ENCODE measurements at regions of chr3 and their contacts with region 1.

Region 1: DNA sequence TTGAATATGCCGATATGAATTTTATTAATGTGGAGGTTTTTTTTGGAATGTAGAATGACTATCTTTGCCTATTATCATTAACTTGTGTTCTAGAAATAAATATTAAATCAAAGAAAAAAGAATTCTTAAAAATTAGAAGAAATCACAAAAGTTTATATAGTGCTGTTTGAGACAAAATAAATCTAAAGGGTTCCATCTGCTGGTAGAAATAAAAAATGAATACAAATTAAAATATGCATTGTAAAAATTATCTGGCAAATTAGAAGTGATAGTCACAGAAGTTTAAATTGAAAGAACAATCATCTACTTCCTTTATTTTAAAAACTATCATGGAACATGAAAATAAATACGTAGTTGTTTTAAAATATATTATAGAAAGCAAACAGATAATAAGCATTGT is 22.7 kb upstream of the ZBTB20 start:
- DNase-seq: no peak
- ATAC-seq: no peak
- H3K4me3 Mint-ChIP-seq: no peak overlapping the region
- H3K27ac Mint-ChIP-seq: no peak overlapping the region
- H3K4me1 Mint-ChIP-seq: peaks cover 15% of the 10 kb centered on the region
- H3K27me3 Mint-ChIP-seq: peaks cover 2% of the 10 kb centered on the region

Region 2: DNA sequence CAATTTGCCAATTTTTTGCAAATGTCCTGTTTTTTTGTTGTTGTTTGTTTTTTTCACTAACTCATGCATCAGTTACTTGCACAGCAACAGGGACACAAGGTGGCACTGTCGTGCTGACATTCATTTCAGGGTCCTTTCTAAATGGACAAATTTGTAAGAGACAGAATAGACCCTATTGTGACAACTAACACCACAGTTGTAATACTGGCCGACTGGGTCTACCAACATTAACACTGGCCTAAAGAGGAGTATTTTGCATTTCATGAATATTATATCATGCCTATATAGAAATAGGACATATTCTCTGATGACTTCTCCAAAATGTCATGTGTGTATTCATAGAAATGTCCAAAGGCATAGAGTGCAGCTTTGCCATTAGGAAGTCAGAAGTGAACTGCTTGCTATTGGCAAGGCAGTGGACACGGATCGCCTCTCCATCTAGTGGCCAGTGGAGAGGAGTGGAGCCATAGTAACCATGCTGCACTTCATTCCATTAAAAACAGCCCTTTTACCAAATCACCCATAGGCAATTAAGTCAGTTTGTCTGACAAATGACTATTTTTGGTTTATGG is 77.5 kb before region 1 on chr3:
- CTCF ChIA-PET with region 1: interaction called, 26 read pairs
- DNase-seq: peak; percentile 74
- ATAC-seq: peak; percentile 67
- H3K4me3 Mint-ChIP-seq: no peak overlapping the region
- H3K27ac Mint-ChIP-seq: no peak overlapping the region
- H3K4me1 Mint-ChIP-seq: no peaks in the 10 kb centered on the region
- H3K27me3 Mint-ChIP-seq: no peaks in the 10 kb centered on the region

Region 3: GRCh38 chr3:115147329-115148141 is 22.3 kb before region 1 on chr3:
- CTCF ChIA-PET with region 1: interaction called, 30 read pairs
- DNase-seq: peak; percentile 98
- ATAC-seq: peak; percentile 85
- H3K4me3 Mint-ChIP-seq: peak overlapping the region; percentile 90
- H3K27ac Mint-ChIP-seq: peak overlapping the region; percentile 96
- H3K4me1 Mint-ChIP-seq: peaks cover 23% of the 10 kb centered on the region
- H3K27me3 Mint-ChIP-seq: peaks cover 1% of the 10 kb centered on the region

Region 4: GRCh38 chr3:115194461-115194860 is 24.7 kb after region 1 on chr3:
- CTCF ChIA-PET with region 1: no interaction called
- DNase-seq: no peak
- ATAC-seq: no peak
- H3K4me3 Mint-ChIP-seq: no peak overlapping the region
- H3K27ac Mint-ChIP-seq: no peak overlapping the region
- H3K4me1 Mint-ChIP-seq: no peaks in the 10 kb centered on the region
- H3K27me3 Mint-ChIP-seq: no peaks in the 10 kb centered on the region

Region 5: GRCh38 chr3:115217678-115218451 is 48.1 kb after region 1 on chr3:
- CTCF ChIA-PET with region 1: no interaction called
- DNase-seq: no peak
- ATAC-seq: peak; percentile 23
- H3K4me3 Mint-ChIP-seq: no peak overlapping the region
- H3K27ac Mint-ChIP-seq: no peak overlapping the region
- H3K4me1 Mint-ChIP-seq: peaks cover 1% of the 10 kb centered on the region
- H3K27me3 Mint-ChIP-seq: no peaks in the 10 kb centered on the region